ENCODE measurements at regions of chr12 and their contacts with region 1.

Region 1: GRCh38 chr12:94532490-94533422 is 73.1 kb upstream of the CEP83 start:
- DNase-seq: peak; percentile 20 to 68 (median 56)
- ATAC-seq: peak; percentile 80
- H3K4me3 ChIP-seq: no peak overlapping the region
- H3K4me3 Mint-ChIP-seq: no peak overlapping the region
- H3K27ac ChIP-seq: no peak overlapping the region
- H3K27ac Mint-ChIP-seq: no peak overlapping the region
- H3K4me1 ChIP-seq: no peaks in the 10 kb centered on the region
- H3K4me1 Mint-ChIP-seq: peaks cover 0 to 17% (median 3%) of the 10 kb centered on the region in 7 donors
- H3K27me3 ChIP-seq: no peaks in the 10 kb centered on the region
- H3K27me3 Mint-ChIP-seq: peaks cover 3 to 19% (median 8%) of the 10 kb centered on the region in 5 donors

Region 2: DNA sequence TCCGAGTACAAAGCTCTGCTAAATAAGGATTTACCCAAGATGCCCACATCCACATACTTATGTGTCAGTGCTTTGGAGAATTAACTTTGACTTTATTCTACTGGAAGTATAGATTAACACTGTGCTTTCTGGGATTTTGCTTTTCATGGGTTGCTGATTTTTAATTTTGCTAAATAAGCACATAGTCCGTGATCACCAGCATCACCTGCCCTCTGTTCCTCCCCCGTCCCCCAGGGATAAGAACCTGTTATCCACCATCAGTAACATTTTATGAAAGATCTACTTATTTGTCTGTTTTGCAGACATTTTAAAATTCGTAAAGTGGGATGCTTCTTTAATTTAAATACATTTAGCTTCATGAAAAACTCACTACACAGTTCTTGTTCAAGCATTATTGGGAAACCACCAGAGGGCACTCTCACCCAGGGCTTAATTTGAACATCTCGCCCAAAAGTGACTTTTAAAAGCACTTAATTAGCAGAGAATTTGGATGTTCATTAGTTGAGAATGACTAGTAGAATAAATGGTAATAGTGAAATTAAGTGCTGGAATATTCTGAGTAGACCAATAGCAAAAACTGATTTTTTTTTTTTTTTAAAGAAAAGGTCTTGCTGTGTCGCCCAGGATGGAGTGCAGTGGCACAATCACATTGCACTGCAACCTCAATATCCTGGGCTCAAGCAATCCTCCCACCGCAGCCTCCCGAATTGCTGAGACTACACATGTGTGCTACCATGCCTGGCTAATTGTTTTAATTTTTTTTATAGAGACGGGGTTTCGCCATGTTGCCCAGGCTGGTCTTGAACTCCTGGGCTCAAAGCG is 1029.7 kb before region 1 on chr12:
- CTCF ChIA-PET with region 1: no interaction called
- POLR2A ChIA-PET with region 1: no interaction called
- intact Hi-C with region 1: loop called in 1 of 2 experiments (anchors 2 kb)
- DNase-seq: peak; percentile 16 to 71 (median 54)
- ATAC-seq: peak; percentile 67
- H3K4me3 ChIP-seq: no peak overlapping the region
- H3K4me3 Mint-ChIP-seq: no peak overlapping the region
- H3K27ac ChIP-seq: no peak overlapping the region
- H3K27ac Mint-ChIP-seq: peak overlapping the region in 3 of 9 donors; percentile 36 to 69 (median 60)
- H3K4me1 ChIP-seq: no peaks in the 10 kb centered on the region
- H3K4me1 Mint-ChIP-seq: peaks cover 0 to 29% (median 0%) of the 10 kb centered on the region in 7 donors
- H3K27me3 ChIP-seq: no peaks in the 10 kb centered on the region
- H3K27me3 Mint-ChIP-seq: no peaks in the 10 kb centered on the region

Region 3: GRCh38 chr12:94133964-94134795 is 398.6 kb before region 1 on chr12:
- CTCF ChIA-PET with region 1: interaction called, 5 read pairs
- POLR2A ChIA-PET with region 1: no interaction called
- intact Hi-C with region 1: loop called (anchors 1 kb)
- DNase-seq: peak in 7 of 9 donors; percentile 34 to 65 (median 59)
- ATAC-seq: peak; percentile 97
- H3K4me3 ChIP-seq: no peak overlapping the region
- H3K4me3 Mint-ChIP-seq: no peak overlapping the region
- H3K27ac ChIP-seq: no peak overlapping the region
- H3K27ac Mint-ChIP-seq: peak overlapping the region in 2 of 9 donors; percentile 16 to 28
- H3K4me1 ChIP-seq: no peaks in the 10 kb centered on the region
- H3K4me1 Mint-ChIP-seq: peaks cover 0 to 10% (median 4%) of the 10 kb centered on the region in 7 donors
- H3K27me3 ChIP-seq: no peaks in the 10 kb centered on the region
- H3K27me3 Mint-ChIP-seq: peaks cover 0 to 11% (median 0%) of the 10 kb centered on the region in 5 donors

Region 4: DNA sequence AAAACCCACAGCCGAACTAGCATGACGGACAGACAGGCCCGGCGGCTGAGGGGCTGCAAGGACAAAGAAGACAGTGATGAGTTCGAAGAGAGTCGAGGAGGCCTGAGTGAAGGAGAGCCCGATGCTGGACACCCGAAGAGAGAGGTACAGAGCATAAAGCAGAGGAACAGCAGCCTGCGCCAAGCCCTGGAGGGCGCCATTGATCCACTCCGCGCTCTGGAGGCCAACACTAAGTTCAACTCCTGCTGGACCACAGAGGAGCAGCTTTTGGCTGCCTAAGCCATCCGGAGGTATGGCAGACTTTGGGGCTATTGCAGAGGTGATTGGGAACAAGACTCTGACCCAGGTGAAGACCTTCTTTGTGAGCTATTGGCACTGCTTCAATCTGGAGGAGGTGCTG is 392.2 kb before region 1 on chr12:
- CTCF ChIA-PET with region 1: interaction called, 6 read pairs
- POLR2A ChIA-PET with region 1: no interaction called
- intact Hi-C with region 1: loop called (anchors 1 kb)
- DNase-seq: peak in 6 of 9 donors; percentile 28 to 57 (median 39)
- ATAC-seq: peak; percentile 64
- H3K4me3 ChIP-seq: no peak overlapping the region
- H3K4me3 Mint-ChIP-seq: no peak overlapping the region
- H3K27ac ChIP-seq: no peak overlapping the region
- H3K27ac Mint-ChIP-seq: peak overlapping the region in 1 of 9 donors; percentile 79
- H3K4me1 ChIP-seq: no peaks in the 10 kb centered on the region
- H3K4me1 Mint-ChIP-seq: peaks cover 0 to 2% (median under 1%) of the 10 kb centered on the region in 7 donors
- H3K27me3 ChIP-seq: no peaks in the 10 kb centered on the region
- H3K27me3 Mint-ChIP-seq: peaks cover 0 to 13% (median 0%) of the 10 kb centered on the region in 5 donors

Region 5: DNA sequence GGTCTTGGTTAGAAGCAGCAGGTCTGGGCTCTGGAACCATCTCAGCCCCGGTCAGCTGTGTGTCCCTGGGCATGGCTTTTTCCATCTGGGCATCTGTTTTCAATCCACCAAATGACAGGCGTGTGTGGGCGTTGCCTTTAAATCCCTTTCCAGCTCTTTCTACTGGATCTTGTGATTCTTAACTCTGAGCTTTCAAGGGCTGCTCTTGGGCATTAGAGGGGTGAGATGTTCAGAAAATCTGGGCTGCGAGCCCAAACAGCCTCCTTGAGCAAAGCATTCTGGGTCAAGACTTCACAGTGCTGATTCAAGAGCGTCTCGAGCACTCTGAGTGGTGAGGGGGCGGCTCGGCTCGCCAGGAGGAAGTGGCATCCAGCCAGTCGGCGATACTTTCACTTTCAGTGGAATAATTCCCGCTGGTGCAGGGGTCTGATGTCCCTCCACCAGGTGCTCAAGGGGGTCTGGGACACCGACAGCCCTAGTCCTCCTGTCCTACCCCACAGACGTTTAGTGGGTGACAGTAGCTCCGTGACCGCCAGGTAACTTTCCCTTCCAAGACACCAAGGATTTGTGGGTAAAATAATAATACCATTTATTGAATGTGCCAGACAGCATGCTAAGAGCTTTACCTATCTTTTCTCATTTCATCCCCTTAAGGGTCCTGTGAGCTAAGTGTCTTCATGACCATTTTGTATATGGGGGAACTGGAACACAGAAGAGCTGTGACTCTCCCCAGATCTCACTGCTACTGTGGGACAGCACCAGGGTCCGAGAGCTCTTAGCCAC is 270.3 kb before region 1 on chr12:
- CTCF ChIA-PET with region 1: no interaction called
- POLR2A ChIA-PET with region 1: no interaction called
- intact Hi-C with region 1: loop called in 1 of 2 experiments (anchors 5 kb)
- DNase-seq: peak; percentile 50 to 81 (median 72)
- ATAC-seq: peak; percentile 89
- H3K4me3 ChIP-seq: peak overlapping the region; percentile 94
- H3K4me3 Mint-ChIP-seq: peak overlapping the region; percentile 80 to 99 (median 97)
- H3K27ac ChIP-seq: peak overlapping the region; percentile 91
- H3K27ac Mint-ChIP-seq: peak overlapping the region; percentile 91 to 100 (median 99)
- H3K4me1 ChIP-seq: peaks cover 15 to 18% of the 10 kb centered on the region in 2 donors
- H3K4me1 Mint-ChIP-seq: peaks cover 23 to 52% (median 46%) of the 10 kb centered on the region in 7 donors
- H3K27me3 ChIP-seq: no peaks in the 10 kb centered on the region
- H3K27me3 Mint-ChIP-seq: no peaks in the 10 kb centered on the region

Region 6: GRCh38 chr12:94329362-94329761 is 203.4 kb before region 1 on chr12:
- CTCF ChIA-PET with region 1: interaction called, 3 read pairs
- POLR2A ChIA-PET with region 1: no interaction called
- intact Hi-C with region 1: loop called in 1 of 2 experiments (anchors 1 kb)
- DNase-seq: no peak
- ATAC-seq: no peak
- H3K4me3 ChIP-seq: no peak overlapping the region
- H3K4me3 Mint-ChIP-seq: no peak overlapping the region
- H3K27ac ChIP-seq: no peak overlapping the region
- H3K27ac Mint-ChIP-seq: no peak overlapping the region
- H3K4me1 ChIP-seq: no peaks in the 10 kb centered on the region
- H3K4me1 Mint-ChIP-seq: peaks cover 0 to 21% (median 0%) of the 10 kb centered on the region in 7 donors
- H3K27me3 ChIP-seq: no peaks in the 10 kb centered on the region
- H3K27me3 Mint-ChIP-seq: no peaks in the 10 kb centered on the region

Region 7: DNA sequence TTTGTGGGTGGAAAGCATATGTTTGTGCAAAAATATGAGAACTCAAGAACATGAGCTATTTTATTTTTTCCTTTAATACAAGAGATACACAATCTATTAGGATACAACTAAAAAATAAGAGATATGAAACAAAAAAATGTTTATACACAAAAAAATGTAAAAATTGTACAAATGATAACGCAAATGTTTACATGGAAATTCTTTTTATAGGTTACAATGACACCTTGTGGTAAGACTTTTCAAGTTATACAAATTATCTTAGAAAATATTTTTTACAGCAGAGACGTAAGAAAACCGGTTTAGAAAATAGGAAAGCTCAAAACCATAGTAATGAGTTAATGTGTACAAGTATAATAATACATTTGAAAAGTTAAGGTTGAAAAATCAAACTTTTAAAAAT is 98.6 kb before region 1 on chr12:
- CTCF ChIA-PET with region 1: no interaction called
- POLR2A ChIA-PET with region 1: no interaction called
- intact Hi-C with region 1: loop called in 1 of 2 experiments (anchors 1 kb)
- DNase-seq: no peak
- ATAC-seq: no peak
- H3K4me3 ChIP-seq: no peak overlapping the region
- H3K4me3 Mint-ChIP-seq: no peak overlapping the region
- H3K27ac ChIP-seq: no peak overlapping the region
- H3K27ac Mint-ChIP-seq: no peak overlapping the region
- H3K4me1 ChIP-seq: peaks cover 0 to 9% of the 10 kb centered on the region in 2 donors
- H3K4me1 Mint-ChIP-seq: peaks cover 12 to 27% (median 22%) of the 10 kb centered on the region in 7 donors
- H3K27me3 ChIP-seq: no peaks in the 10 kb centered on the region
- H3K27me3 Mint-ChIP-seq: no peaks in the 10 kb centered on the region

Region 8: GRCh38 chr12:94839347-94839746 is 306.6 kb after region 1 on chr12:
- CTCF ChIA-PET with region 1: no interaction called
- POLR2A ChIA-PET with region 1: no interaction called
- intact Hi-C with region 1: no loop called
- DNase-seq: no peak
- ATAC-seq: no peak
- H3K4me3 ChIP-seq: no peak overlapping the region
- H3K4me3 Mint-ChIP-seq: no peak overlapping the region
- H3K27ac ChIP-seq: no peak overlapping the region
- H3K27ac Mint-ChIP-seq: no peak overlapping the region
- H3K4me1 ChIP-seq: no peaks in the 10 kb centered on the region
- H3K4me1 Mint-ChIP-seq: no peaks in the 10 kb centered on the region
- H3K27me3 ChIP-seq: no peaks in the 10 kb centered on the region
- H3K27me3 Mint-ChIP-seq: peaks cover 0 to 5% (median 0%) of the 10 kb centered on the region in 5 donors